ENCODE measurements at regions of chr10 and their contacts with region 1.

Region 1: DNA sequence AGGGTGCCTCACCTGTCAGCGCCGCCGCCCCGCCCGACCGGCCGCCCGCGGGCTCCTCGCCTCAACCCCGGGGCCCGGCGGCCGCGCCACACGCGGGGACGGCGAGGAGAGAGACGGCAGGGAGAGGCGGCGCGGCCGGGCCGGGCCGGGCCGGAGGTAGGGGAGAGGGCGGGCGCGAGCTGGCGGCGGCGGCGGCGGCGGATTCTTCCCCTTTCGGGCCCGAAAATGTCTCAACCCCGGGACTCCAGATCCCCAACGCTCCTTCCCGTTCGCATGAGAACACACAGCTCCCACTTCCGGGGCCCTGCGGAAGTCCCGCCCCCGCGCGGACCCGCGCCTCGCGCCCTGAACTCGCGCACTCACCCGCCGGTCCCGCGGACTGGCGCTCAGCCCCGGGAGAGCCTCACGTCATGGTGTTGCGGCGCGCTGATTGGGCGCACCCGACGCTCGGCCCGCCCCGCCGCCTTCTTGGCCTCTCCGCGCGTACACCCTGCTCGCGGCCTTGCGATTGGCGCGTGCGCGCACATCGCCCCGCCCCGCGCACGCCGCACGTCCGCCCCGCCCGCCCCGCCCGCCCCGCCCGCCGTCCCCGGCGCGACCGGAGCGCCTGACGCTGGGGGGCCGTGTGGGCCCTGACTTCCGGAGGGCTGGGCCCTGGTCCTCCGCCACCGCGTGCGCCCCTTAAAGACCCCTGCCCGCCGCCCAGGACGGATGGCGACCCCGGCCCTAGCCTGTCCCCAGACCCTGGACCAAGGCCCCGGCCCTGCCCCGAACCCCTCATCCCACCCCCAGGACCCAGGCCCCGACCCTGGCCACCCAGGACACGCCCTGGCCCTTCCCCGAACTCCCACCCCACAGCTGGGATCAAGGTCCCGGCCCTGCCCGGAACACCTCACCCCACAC is at the start of gene LARP4B:
- DNase-seq: peak; percentile 91 to 98 (median 96)
- ATAC-seq: peak; percentile 96 to 97
- H3K4me3 Mint-ChIP-seq: peak within 1 kb of the TSS; percentile 91 to 99 (median 94)
- H3K27ac Mint-ChIP-seq: peak within 1 kb of the TSS; percentile 90 to 98 (median 96)
- H3K4me1 Mint-ChIP-seq: peaks cover 14 to 43% (median 37%) of the 10 kb centered on the region in 4 donors
- H3K27me3 Mint-ChIP-seq: no peaks in the 10 kb centered on the region
- polyA plus RNA-seq, gene LARP4B: 22.8 to 40.5 (median 28.1) TPM

Region 2: DNA sequence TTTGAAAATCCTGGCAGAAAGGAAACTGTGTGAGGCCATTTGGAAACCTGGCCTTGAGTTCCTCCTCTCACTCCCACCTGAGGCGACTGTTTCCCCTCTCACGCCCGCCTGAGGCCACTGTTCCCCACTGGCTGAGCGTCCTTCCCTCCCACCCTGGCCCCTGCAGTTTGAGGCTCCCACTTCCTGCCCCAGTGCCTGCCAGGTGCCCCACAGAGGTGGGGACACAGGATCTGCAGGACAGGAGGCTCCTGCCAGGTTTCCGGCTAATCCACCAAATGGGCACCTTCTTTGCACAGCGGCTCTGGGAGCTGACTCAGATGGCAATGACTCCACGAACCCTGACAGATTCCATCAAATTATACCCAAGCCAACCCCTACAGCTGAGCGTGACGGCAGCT is 24.2 kb after region 1 on chr10:
- POLR2A ChIA-PET with region 1: no interaction called
- DNase-seq: no peak
- ATAC-seq: no peak
- H3K4me3 Mint-ChIP-seq: no peak overlapping the region
- H3K27ac Mint-ChIP-seq: no peak overlapping the region
- H3K4me1 Mint-ChIP-seq: peaks cover 0 to 3% (median 0%) of the 10 kb centered on the region in 4 donors
- H3K27me3 Mint-ChIP-seq: peaks cover 2 to 13% (median 3%) of the 10 kb centered on the region in 5 donors

Region 3: GRCh38 chr10:987870-988666 is 56.4 kb after region 1 on chr10 and contains the start of gene GTPBP4:
- POLR2A ChIA-PET with region 1: interaction called, 15 read pairs
- DNase-seq: peak; percentile 87 to 99 (median 96)
- ATAC-seq: peak; percentile 96 to 98
- H3K4me3 Mint-ChIP-seq: peak within 1 kb of the TSS; percentile 90 to 99 (median 96)
- H3K27ac Mint-ChIP-seq: peak within 1 kb of the TSS; percentile 88 to 99 (median 98)
- H3K4me1 Mint-ChIP-seq: peaks cover 17 to 49% (median 45%) of the 10 kb centered on the region in 4 donors
- H3K27me3 Mint-ChIP-seq: no peaks in the 10 kb centered on the region
- polyA plus RNA-seq, gene GTPBP4: 22.7 to 29.8 (median 25.9) TPM

Region 4: GRCh38 chr10:1048732-1049424 is 117.2 kb after region 1 on chr10 and contains the start of gene IDI1:
- POLR2A ChIA-PET with region 1: interaction called, 16 read pairs
- DNase-seq: peak; percentile 94 to 98 (median 96)
- ATAC-seq: peak; percentile 81 to 83
- H3K4me3 Mint-ChIP-seq: peak within 1 kb of the TSS; percentile 91 to 97 (median 94)
- H3K27ac Mint-ChIP-seq: peak within 1 kb of the TSS; percentile 94 to 99 (median 98)
- H3K4me1 Mint-ChIP-seq: peaks cover 24 to 76% (median 67%) of the 10 kb centered on the region in 4 donors
- H3K27me3 Mint-ChIP-seq: no peaks in the 10 kb centered on the region
- polyA plus RNA-seq, gene IDI1: 31.0 to 53.5 (median 33.9) TPM